ENCODE measurements at regions of chr18 and their contacts with region 1.

Region 1: DNA sequence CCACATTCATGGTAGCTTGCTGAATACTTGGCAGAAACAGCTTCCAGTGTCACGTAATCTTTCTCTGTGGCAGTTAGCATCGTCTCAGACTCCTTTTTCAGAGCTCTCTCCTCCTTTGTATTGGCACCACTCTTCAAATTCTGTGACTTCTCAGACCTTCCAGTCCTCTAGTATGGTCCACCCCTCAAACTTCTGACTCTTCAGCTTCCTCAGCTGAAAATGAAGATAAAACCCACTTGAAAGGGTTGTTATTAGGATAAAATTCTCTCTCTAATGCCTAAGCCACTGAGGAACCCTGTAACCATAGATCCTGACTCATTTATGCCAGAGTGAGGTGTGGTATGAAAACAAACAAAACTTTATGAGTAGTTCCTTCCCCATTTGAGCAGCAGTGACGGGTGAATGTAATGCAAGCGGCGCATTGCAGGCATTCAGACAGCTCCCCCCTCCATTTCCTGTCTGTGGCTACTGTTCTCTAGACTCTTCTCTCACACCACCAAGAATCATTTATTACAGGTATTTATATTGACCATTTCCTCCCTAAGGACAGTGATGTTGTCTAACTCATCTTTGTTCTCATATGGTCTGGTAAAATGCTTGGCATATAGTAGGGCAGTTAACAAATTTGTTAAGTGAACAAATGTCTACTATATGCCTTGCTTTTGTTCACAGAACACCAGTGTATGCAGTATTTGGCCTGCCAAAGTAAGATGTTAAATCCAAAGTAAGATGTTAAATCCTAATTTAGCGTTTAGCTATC is 35.3 kb downstream of the GALNT1 start:
- DNase-seq: peak; percentile 13 to 84 (median 57)
- ATAC-seq: peak; percentile 93
- H3K4me3 ChIP-seq: peak overlapping the region; percentile 4
- H3K4me3 Mint-ChIP-seq: no peak overlapping the region
- H3K27ac ChIP-seq: peak overlapping the region; percentile 16 to 66
- H3K27ac Mint-ChIP-seq: no peak overlapping the region
- H3K4me1 ChIP-seq: peaks cover 6% of the 10 kb centered on the region
- H3K4me1 Mint-ChIP-seq: peaks cover 5% of the 10 kb centered on the region
- H3K27me3 ChIP-seq: no peaks in the 10 kb centered on the region
- H3K27me3 Mint-ChIP-seq: no peaks in the 10 kb centered on the region
- CTCF ChIP-seq: no peak

Region 2: DNA sequence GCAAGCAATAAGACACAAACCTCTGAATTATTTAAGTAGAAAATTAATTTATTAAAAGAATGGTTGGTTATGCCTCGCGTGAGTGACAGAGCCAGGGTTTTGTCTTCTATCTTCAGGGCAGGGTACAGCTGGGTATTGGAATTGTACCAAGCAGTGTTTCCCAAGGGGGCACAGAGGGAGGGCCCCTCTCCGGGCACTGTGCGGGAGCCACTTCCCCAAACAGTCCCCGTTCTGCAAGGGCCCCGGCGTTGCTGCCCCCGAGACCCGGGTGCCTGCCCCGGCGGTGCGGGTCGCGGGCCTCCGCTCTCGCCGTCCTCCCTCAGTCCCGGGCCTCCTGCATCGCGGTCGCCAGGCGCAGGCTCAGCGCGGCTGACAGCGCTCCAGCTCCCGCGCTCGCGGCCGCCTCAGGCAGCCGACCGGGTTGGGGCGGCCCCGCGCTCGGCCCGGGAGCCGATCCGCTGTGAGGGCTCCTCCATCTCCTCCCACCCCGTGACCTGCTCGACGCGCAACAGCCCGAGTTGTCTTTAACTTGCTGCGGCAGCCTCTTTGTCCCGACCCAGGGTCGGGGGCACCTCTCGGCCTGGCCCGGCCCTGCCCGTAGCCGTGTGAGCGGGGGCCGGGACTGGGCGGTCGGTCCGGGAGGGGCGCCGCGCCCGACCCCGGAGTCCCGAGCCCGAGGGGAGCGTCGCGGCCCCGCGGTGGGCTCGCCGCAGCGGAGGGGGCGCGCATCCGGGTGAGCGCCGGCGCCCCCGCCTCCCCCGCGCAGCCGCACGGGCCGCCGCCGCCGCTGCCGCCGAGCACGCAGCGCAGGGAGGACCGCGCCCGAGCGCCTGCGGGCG is 35.9 kb before region 1 on chr18:
- CTCF ChIA-PET with region 1: interaction called, 5 read pairs
- POLR2A ChIA-PET with region 1: interaction called, 11 read pairs
- intact Hi-C with region 1: loop called (anchors 1 to 5 kb)
- DNase-seq: peak; percentile 21 to 84 (median 44)
- ATAC-seq: peak; percentile 75
- H3K4me3 ChIP-seq: peak overlapping the region; percentile 55
- H3K4me3 Mint-ChIP-seq: peak overlapping the region; percentile 63
- H3K27ac ChIP-seq: peak overlapping the region; percentile 26 to 42
- H3K27ac Mint-ChIP-seq: no peak overlapping the region
- H3K4me1 ChIP-seq: peaks cover 18% of the 10 kb centered on the region
- H3K4me1 Mint-ChIP-seq: peaks cover 35% of the 10 kb centered on the region
- H3K27me3 ChIP-seq: no peaks in the 10 kb centered on the region
- H3K27me3 Mint-ChIP-seq: peaks cover 13% of the 10 kb centered on the region
- CTCF ChIP-seq: no peak

Region 3: DNA sequence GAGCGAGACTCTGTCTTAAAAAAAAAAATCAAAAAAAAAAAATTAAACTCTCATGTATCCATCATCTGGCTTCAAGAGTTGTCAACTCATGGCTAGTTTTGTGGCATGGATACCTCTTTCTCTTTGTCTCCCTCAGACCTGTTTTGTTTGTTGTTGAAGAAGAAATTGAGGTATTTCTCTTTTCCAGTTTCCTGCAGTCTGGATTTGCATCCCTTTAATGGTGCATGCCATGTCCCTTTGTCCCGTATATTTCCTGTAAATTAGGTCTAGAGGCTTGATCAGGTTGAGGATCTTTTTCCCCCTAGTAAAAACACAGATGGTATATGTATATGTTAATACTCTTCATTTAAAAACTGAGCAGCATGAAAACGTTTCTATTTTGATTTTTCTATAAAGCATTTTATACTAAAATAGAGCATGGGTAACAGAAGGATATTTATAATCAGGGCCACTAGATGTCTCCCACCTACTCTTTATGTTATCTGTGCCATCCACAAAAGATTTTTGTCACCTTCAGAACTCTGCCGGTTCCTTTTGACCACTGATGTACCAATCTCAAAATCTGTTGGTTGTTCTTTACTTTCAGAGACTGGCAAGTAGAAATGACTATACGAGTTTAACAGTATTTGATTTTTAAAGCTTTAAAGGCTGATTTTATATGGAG is 44.8 kb after region 1 on chr18:
- CTCF ChIA-PET with region 1: no interaction called
- POLR2A ChIA-PET with region 1: no interaction called
- intact Hi-C with region 1: loop called (anchors 5 kb)
- DNase-seq: no peak
- ATAC-seq: no peak
- H3K4me3 ChIP-seq: no peak overlapping the region
- H3K4me3 Mint-ChIP-seq: no peak overlapping the region
- H3K27ac ChIP-seq: no peak overlapping the region
- H3K27ac Mint-ChIP-seq: no peak overlapping the region
- H3K4me1 ChIP-seq: no peaks in the 10 kb centered on the region
- H3K4me1 Mint-ChIP-seq: no peaks in the 10 kb centered on the region
- H3K27me3 ChIP-seq: no peaks in the 10 kb centered on the region
- H3K27me3 Mint-ChIP-seq: no peaks in the 10 kb centered on the region
- CTCF ChIP-seq: no peak

Region 4: GRCh38 chr18:35842536-35842935 is 225.7 kb after region 1 on chr18:
- CTCF ChIA-PET with region 1: no interaction called
- POLR2A ChIA-PET with region 1: no interaction called
- intact Hi-C with region 1: no loop called
- DNase-seq: peak in 2 of 14 experiments; percentile 14 to 41
- ATAC-seq: no peak
- H3K4me3 ChIP-seq: no peak overlapping the region
- H3K4me3 Mint-ChIP-seq: no peak overlapping the region
- H3K27ac ChIP-seq: no peak overlapping the region
- H3K27ac Mint-ChIP-seq: no peak overlapping the region
- H3K4me1 ChIP-seq: no peaks in the 10 kb centered on the region
- H3K4me1 Mint-ChIP-seq: no peaks in the 10 kb centered on the region
- H3K27me3 ChIP-seq: no peaks in the 10 kb centered on the region
- H3K27me3 Mint-ChIP-seq: peaks cover 22% of the 10 kb centered on the region
- CTCF ChIP-seq: no peak